Posterior vena cava (tissue), 2 donors: ENCODE measurements at regions of chr6 and their contacts with region 1.

Region 1: GRCh38 chr6:31901953-31902643 is at the start of gene ZBTB12:
- DNase-seq: peak; percentile 95
- total RNA-seq, gene ZBTB12: 3.6 to 4.2 TPM

Region 2: DNA sequence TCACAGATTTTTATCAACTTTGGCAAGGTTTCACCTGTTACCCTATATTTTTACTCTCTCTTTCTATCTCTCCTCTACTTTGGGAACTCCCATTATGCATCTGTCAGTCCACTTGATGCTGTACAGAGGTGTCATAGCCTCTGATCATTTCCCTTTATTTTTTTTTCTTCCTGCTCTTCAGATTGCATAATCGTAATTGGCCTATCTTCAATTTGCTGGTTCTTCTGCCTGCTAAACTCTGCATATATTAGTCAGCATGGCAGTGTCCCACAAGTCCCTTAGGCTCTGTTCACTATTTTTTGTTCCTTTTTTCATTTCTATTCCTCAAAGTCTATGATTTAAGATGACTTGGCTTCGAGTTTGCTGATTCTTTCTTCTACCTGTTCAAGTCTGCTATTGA is 448.8 kb before region 1 on chr6:
- intact Hi-C with region 1: no loop called
- DNase-seq: no peak

Region 3: DNA sequence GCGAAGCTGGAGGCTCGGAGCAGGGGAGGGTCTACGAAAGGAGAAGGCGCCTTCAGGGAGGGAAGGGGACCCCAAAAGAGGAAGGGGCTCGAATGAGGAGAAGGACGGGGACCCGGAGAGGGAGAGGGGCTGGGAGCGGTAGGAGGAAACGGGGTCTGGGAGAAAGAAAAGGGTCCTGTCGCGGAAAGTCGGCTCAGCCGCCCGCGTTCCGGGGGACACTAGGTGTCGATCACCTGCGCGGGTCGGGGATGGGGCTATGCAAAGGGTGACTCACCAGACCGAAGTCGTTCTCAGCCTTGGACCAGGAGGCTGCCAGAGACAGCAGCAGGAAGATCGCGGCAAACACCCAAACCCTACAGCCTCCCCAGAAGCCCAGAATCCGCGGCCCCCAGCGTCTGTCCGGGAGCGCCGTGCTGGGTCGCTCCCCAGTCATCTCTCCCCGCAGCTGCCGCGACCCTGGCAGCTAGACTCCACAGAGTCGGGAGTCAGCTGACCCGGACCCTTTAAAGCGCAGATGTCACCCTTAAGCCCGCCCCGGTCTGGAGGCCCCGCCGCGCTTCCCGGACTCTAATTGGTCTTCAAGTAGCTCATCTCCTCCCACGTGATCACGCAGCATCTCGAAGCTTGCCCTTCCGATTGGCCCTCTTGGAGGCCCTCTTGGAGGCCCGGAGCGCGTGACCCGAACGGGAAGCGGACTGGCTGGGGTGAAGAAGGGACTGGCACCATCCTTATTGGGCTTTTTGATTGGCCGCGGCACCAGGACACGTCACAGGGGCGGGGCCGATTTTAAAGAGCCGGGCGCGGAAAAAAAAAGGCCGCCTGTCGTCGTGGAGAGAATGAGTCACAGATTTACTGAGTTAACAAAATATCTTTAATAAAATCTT is 39.5 kb before region 1 on chr6 and contains the start of gene NEU1:
- intact Hi-C with region 1: loop called in 1 of 2 experiments (anchors 1 kb)
- DNase-seq: peak; percentile 100
- total RNA-seq, gene NEU1: 22.2 to 29.0 TPM

Region 4: DNA sequence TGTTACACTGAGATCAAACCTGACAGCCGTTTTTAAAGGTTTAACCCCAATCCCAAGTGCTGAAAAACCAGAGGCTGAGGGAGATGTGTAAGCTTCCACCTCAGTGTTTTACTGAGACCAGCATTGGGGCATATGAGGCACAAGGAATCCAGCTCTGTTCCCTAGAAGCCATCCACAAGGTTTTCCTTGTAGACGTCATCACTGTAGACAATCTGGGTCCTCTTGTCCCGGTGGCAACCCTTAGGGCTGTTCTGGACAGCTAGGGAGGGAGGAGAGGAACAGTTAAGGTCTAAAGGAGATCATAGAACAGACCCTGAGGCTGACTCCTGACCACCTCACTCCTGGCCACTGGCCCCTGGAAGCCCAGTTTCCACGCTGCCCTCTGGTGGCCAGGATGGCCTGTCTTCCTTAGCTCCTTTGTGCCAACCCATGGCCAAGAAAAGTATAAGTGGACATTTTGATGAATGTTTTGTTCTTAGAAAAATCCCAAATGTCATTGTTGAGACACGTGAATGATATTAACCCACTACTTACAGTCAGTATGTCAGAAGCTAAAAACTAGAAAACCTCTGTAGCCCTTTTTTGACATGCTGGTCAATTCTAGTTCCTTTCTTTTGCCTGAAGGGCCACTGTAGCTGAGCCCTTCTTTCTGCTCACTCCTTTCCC is 50.2 kb after region 1 on chr6:
- intact Hi-C with region 1: loop called (anchors 5 kb)
- DNase-seq: no peak